ENCODE measurements at regions of chr2 and their contacts with region 1.

Region 1: DNA sequence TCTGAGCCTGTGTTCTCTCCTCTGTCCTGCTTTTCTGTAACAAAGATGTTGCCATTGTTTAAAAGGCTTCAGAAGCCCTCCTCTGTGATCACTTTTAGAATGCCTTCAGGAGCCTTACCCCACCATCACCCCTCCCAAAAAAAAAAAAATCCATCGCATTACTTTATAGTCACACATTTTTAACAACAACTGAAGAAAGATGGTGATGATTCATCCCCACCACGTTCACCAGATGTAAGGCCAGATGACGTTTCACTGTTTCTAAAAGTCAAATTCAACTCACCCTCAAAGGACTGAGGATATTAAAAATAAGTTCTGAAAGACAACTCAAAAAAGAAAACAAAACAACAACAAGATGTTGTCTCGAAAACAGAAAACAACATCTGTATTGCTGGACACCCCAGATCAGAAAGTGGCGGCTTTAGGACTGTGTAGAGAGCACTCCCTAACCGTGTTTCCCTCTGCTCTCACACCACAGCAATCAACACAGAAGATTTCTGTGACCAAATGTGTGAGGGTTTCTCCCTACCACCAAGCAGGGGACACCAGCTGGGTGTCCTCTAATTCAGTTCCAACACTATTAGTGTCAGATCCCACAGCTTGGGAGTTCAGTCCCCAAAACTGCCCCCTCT is 61.9 kb upstream of the CREB1 start:
- DNase-seq: no peak
- ATAC-seq: no peak
- H3K4me3 ChIP-seq: no peak overlapping the region
- H3K27ac ChIP-seq: no peak overlapping the region
- H3K4me1 ChIP-seq: 0 out of 2 replicates have a peak, but pooled peaks cover 1% of the 10 kb centered on the region
- H3K27me3 ChIP-seq: no peaks in the 10 kb centered on the region
- CTCF ChIP-seq: no peak

Region 2: DNA sequence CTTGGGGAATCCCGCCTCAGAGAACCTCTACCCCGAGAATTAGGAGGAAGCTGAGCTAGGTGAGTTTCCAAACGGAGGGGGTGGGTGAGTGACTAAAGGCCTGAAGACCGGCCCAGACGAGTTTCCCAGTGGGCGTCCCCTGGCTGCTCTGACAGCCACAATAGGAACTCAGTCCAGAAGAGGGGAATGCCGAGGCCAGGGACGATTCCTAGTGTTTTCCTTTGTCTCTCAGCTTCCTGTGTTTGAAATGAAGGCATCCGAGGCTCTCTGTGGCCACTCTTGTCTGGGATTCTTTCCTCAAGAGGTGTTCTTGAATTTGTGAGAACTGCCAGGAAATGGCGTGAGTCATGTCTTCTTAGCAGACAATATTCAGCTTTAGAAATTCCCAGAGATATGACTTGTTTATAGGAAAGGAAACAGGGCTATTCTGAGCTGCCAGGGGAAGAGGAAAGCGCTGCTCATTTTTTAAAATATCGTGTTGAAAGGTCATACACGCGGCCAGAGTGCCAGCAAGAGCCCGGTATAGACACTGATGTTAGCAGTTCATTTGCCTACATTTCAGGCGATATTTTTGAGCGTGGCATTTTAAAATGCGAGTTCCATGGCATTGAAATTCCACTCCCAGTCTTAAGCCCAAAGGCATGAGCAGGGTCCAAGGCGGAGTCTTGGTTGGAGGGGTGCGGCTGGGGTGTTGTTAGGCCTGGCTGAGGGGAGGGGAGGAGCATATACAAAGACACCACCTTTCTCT is 133.0 kb before region 1 on chr2:
- CTCF ChIA-PET with region 1: no interaction called
- POLR2A ChIA-PET with region 1: no interaction called
- in situ Hi-C with region 1: no loop called
- intact Hi-C with region 1: no loop called
- DNase-seq: peak; percentile 47
- ATAC-seq: peak; percentile 87
- H3K4me3 ChIP-seq: peak overlapping the region; percentile 20 to 48
- H3K27ac ChIP-seq: peak overlapping the region; percentile 81
- H3K4me1 ChIP-seq: peaks cover 19% of the 10 kb centered on the region
- H3K27me3 ChIP-seq: no peaks in the 10 kb centered on the region
- CTCF ChIP-seq: no peak

Region 3: GRCh38 chr2:207565736-207566500 is 98.1 kb after region 1 on chr2:
- CTCF ChIA-PET with region 1: no interaction called
- POLR2A ChIA-PET with region 1: interaction called, 15 read pairs
- in situ Hi-C with region 1: no loop called
- intact Hi-C with region 1: no loop called
- DNase-seq: no peak
- ATAC-seq: no peak
- H3K4me3 ChIP-seq: no peak overlapping the region
- H3K27ac ChIP-seq: no peak overlapping the region
- H3K4me1 ChIP-seq: no peaks in the 10 kb centered on the region
- H3K27me3 ChIP-seq: no peaks in the 10 kb centered on the region
- CTCF ChIP-seq: no peak

Measured in Panc1 (cell line).